Activated T-helper 1 cell treated with anti-CD3 and anti-CD28 coated beads, Interleukin-12 subunit alpha, Interleukin-12 subunit beta, Interleukin-2, Interleukin-4 antibody, amounts not matched to agents 30 ng/mL and 10 ng/mL and 1 ng/mL, durations not matched to agents 14 hours and 24 hours and 36 hours (primary cell): ENCODE measurements at regions of chr11 and their contacts with region 1.

Region 1: DNA sequence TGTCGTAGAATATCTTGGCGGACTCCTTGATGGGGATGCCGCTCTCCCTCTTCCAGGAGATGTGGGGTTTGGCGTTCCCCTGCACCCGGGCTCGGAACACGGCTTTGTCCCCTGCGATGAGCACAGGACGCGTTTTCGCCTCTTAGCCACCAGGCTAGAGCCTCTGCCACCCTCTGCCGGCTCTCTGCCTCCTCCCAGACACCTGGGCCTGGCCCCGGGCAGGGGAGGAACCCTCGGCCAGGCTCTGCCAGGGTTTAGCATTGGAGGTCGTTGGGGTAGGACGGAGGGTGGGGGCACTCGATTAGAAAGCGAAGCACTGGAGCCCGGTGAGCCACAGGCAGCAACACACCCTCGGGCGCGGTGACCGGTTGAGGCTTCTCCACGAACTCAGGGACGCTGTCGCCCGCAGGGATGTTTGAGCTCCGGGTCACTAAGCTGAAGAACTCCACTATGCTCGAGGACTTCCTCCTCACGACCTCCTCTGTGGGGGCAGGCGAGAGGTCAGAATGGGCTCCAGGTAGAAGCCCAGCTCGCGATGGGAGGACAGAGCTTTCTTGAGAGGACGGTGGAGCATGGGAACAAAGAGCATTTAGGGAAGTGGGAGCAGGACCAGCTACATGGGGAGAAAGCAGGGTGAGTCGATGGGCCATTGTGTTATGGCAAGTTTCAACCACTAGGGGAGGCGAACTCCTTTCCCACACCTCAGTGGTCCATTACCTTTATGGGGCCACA is 4.3 kb downstream of the IGSF22 start:
- DNase-seq: peak; percentile 38
- H3K4me3 Mint-ChIP-seq: peak overlapping the region; percentile 87
- H3K27ac Mint-ChIP-seq: no peak overlapping the region
- H3K4me1 Mint-ChIP-seq: peaks cover 21% of the 10 kb centered on the region
- H3K27me3 Mint-ChIP-seq: peaks cover 31% of the 10 kb centered on the region

Region 2: DNA sequence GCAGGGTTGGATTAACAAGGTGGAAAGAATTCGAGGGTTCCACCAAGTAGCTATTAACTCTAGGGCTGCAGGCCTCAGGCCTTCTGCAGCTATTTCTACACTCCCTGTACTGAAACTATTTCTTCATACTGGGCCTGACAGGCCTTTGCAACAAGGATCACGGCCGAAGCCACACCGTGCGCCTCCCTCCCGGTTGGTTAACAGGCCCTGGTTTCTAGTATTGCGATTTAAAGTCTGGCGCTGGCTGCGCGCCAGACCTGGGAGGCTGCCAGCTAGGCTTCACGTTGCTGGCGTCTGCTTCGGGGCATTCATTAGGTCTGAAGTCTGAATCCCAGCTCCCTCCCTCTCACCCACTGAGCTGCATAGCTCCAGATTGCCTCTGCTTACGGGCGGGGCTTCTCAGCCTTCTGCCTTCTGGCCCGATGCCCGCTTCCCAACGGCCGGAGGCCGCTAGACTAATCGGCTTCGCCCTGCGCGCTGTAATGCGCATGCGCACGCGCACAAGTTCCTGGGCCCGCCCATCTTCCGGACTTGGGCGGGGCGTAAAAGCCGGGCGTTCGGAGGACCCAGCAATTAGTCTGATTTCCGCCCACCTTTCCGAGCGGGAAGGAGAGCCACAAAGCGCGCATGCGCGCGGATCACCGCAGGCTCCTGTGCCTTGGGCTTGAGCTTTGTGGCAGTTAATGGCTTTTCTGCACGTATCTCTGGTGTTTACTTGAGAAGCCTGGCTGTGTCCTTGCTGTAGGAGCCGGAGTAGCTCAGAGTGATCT is 325.8 kb before region 1 on chr11:
- intact Hi-C with region 1: loop called (anchors 5 kb)
- DNase-seq: peak; percentile 96
- H3K4me3 Mint-ChIP-seq: peak overlapping the region; percentile 99
- H3K27ac Mint-ChIP-seq: peak overlapping the region; percentile 98
- H3K4me1 Mint-ChIP-seq: peaks cover 67% of the 10 kb centered on the region
- H3K27me3 Mint-ChIP-seq: no peaks in the 10 kb centered on the region

Region 3: DNA sequence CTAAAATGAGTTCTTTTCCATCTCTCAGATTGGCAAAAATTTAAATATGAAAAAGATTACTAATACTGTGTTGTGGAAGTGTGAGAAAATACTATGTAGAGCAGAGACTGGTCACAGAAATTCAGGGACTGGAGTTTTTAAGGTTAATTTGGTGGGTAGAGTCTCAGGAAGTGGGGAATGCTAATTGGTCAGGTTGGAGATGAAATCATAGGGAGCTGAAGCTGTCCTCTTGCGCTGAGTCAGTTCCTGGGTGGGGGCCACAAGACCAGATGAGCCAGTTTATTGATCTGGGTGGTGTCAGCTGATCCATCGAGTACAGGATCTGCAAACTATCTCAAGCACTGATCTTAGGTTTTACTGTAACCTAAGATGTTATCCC is 52.5 kb before region 1 on chr11:
- intact Hi-C with region 1: loop called (anchors 1 kb)
- DNase-seq: no peak
- H3K4me3 Mint-ChIP-seq: no peak overlapping the region
- H3K27ac Mint-ChIP-seq: no peak overlapping the region
- H3K4me1 Mint-ChIP-seq: peaks cover 31% of the 10 kb centered on the region
- H3K27me3 Mint-ChIP-seq: peaks cover 7% of the 10 kb centered on the region

Region 4: DNA sequence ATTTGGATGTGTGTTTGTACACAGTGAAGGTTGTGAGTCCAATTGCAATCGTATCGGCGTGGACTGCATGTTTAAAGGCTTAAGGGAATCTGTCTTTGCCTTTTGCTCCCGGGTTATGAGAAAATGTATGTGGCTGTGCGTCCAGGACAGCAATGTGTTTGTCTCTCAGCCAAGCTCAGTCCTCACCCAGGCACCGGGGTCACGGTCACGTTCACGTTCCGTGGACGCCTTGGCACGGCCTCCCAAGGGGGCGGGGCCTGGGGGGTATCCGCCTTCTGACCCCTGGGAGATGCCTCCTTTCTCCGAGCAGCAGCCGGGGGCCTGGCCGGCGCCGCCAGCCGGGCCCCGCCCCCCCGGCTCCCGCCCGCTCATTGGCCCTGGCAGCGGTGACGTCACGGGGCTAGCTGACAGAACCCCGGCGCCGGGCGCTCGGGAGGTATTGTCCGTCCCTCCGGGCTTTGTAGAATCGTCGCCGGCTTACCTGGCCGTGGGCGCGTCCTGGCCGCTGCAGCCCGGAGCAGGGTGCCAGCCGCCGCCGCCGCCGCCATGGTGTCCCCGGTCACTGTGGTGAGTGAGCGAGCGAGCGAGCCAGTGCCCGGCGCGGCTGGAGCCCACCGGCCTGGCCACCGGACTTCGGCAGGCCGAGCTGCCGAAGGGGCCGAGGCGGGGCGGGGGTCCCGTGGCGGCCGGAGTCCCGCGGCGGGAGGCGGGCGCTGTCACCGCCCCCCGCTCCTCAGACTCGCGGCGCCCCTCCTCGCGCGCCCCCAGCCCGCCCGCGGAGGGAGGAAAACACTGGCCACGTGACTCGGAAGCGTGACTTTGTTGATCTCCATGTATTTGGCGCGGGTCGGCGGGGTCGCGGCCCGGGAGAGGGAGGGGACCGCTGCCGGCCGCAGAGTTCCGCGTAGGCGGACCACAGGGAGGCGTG is 23.1 kb before region 1 on chr11 and contains the start of gene TMEM86A:
- intact Hi-C with region 1: loop called (anchors 1 kb)
- DNase-seq: peak; percentile 89
- H3K4me3 Mint-ChIP-seq: peak within 1 kb of the TSS; percentile 83
- H3K27ac Mint-ChIP-seq: peak within 1 kb of the TSS; percentile 65
- H3K4me1 Mint-ChIP-seq: peaks cover 25% of the 10 kb centered on the region
- H3K27me3 Mint-ChIP-seq: peaks cover 22% of the 10 kb centered on the region
- total RNA-seq, gene TMEM86A: 0.52 and 0.93 TPM in 2 replicates

Region 5: GRCh38 chr11:19200410-19201201 is 478.9 kb after region 1 on chr11:
- intact Hi-C with region 1: no loop called
- DNase-seq: no peak
- H3K4me3 Mint-ChIP-seq: no peak overlapping the region
- H3K27ac Mint-ChIP-seq: no peak overlapping the region
- H3K4me1 Mint-ChIP-seq: peaks cover 5% of the 10 kb centered on the region
- H3K27me3 Mint-ChIP-seq: peaks cover 11% of the 10 kb centered on the region